ENCODE measurements at regions of chr12 and their contacts with region 1.

Region 1: DNA sequence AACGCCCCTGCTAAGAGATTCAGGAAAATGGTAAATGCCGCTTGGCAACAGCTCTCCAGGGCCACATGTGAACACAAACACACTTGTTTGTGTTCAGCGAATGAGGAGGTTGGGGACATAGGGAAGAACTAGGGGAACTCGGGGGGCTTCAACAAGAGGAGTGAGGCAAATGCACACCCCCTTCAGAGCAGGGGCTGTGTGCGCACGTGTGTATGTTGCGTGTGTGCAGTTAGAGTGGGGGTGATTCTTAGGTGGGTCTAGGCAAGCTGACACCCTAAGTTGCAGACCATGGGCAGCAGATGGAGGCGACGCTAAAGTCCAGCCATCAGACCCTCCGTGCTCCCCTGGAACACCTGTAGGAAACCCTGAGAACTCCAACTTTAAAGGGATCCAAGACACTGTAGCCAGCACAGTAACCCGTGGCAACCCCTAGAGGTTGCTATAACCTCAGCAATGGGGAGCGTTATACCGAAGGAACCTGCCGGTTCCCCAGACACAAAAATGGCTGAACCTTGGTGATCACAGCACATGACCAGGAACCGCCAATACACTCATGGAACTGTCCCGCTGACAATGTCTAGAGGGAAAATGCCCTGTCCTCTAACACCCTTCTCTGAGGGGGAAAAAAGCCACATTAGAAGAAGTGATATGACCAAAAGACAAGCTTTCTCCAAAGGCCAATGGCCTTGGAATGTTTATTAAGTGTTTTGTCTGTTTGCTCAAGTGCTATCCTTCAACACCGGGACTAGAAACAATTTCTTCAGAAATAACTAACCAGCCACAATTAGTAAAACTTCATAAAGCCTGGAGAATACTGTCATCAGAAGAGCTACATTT is 86.5 kb upstream of the CEP83 start:
- DNase-seq: peak; percentile 57 to 60
- ATAC-seq: peak; percentile 98

Region 2: GRCh38 chr12:94762259-94762942 is 216.2 kb after region 1 on chr12:
- intact Hi-C with region 1: loop called in 1 of 2 experiments (anchors 5 kb)
- DNase-seq: no peak
- ATAC-seq: peak; percentile 92

Measured in left colon (tissue), 2 donors.